ENCODE measurements at regions of chr5 and their contacts with region 1.

Region 1: DNA sequence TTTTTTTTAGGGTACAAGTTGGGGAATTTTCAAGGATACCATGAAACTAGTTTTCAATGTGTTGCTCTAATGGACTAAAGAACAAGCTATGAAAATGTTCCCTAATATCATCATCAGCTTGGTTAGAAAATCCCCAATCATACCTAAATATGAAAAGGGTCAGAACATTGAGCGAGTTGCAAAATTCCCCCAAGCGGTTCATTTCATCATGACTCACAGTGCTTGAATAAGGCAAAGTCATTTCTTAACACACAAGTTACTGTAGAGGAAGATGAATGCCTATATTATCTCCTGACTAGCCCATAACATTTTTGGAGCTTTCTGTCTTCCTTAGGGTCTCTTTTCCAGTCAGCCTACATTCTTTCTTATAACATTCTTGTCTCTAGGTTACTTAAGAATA is 62.7 kb downstream of the ST8SIA4 start:
- DNase-seq: peak; percentile 47
- H3K4me3 ChIP-seq: no peak overlapping the region
- H3K27ac ChIP-seq: peak overlapping the region; percentile 89
- H3K4me1 ChIP-seq: peaks cover 47% of the 10 kb centered on the region
- H3K27me3 ChIP-seq: no peaks in the 10 kb centered on the region
- CTCF ChIP-seq: no peak
- POLR2A ChIP-seq: no peak

Region 2: DNA sequence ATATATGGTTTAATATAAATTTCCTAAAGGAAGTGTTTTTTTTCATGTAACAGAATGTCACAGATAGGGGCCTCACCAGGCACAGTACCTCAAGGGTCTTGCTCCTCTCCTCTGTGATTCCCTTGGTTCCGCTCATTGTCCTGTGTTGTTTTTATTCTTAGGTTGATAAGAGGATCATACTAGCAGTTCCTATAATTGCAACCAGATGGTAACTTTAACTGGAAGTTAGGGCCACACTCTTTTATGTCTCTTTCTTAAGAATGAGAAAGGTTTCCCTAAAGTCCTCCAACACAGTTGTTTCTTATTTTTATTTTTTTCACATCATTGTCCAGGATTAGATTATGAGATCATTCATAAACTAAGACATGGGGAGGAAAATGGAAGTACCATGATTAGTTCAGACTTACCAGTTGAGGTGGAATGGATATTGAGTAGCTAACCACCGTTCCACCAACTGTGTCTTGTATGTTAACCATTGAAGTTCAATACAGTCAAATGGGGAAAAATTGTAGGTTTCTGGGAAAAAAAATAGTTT is 264.1 kb before region 1 on chr5:
- CTCF ChIA-PET with region 1: no interaction called
- POLR2A ChIA-PET with region 1: no interaction called
- dilution Hi-C with region 1: no loop called
- intact Hi-C with region 1: loop called (anchors 2 kb)
- DNase-seq: peak; percentile 83
- H3K4me3 ChIP-seq: peak overlapping the region in 1 of 3 experiments; percentile 32
- H3K27ac ChIP-seq: peak overlapping the region; percentile 92
- H3K4me1 ChIP-seq: peaks cover 24% of the 10 kb centered on the region
- H3K27me3 ChIP-seq: no peaks in the 10 kb centered on the region
- CTCF ChIP-seq: no peak
- POLR2A ChIP-seq: no peak

Region 3: DNA sequence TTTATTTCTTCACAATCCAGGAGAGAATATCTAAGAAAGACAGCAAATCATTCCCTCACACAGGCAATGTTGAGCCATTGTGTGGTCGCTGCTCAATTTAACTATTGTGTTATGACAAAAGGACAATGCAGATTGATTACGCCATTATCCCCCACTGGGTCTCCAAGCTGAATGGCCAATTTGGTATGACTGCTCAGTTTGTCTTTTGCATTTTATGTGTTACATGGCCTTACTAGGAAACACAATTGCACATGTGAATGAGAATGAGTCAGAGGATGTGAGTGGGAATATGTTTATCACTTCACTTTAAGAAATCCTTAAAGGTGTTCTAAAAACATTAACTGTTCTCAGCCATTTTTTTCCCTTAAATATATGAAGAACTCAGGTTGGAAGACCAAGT is 196.9 kb before region 1 on chr5:
- CTCF ChIA-PET with region 1: no interaction called
- POLR2A ChIA-PET with region 1: no interaction called
- dilution Hi-C with region 1: no loop called
- intact Hi-C with region 1: loop called (anchors 5 kb)
- DNase-seq: peak; percentile 79
- H3K4me3 ChIP-seq: no peak overlapping the region
- H3K27ac ChIP-seq: peak overlapping the region; percentile 10
- H3K4me1 ChIP-seq: peaks cover 12% of the 10 kb centered on the region
- H3K27me3 ChIP-seq: no peaks in the 10 kb centered on the region
- CTCF ChIP-seq: no peak
- POLR2A ChIP-seq: no peak

Region 4: DNA sequence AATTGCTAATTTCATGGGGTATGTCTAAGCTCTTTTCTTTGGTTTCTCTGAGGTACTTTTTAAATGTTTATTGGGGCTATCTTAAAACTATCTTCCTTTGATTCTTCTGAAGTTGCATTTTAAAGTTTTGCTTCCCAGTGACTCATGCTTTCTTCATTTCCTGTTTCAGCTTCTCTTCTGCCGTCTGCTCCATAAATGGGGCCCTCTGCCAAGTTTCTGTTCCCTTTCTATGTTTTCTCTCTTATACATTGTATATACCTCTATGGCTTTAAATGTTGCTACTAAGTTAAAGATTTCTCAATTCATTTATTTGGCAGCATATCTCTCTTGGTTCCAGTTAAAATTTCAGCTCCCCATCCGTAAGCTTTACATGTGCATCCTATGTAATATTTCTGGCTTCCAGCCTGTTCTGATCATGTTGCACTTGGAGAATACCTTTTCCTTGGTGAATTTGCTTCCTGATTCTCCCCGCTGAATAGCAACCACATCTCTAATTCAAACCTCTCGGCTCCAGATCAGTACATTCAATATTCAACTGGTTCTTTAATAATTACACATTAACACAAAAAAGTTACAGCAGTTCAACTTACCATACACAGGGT is 62.6 kb before region 1 on chr5:
- CTCF ChIA-PET with region 1: interaction called, 3 read pairs
- POLR2A ChIA-PET with region 1: no interaction called
- dilution Hi-C with region 1: no loop called
- intact Hi-C with region 1: loop called (anchors 2 kb)
- DNase-seq: peak; percentile 91
- H3K4me3 ChIP-seq: peak overlapping the region in 1 of 3 experiments; percentile 21
- H3K27ac ChIP-seq: peak overlapping the region; percentile 73
- H3K4me1 ChIP-seq: peaks cover 22% of the 10 kb centered on the region
- H3K27me3 ChIP-seq: no peaks in the 10 kb centered on the region
- CTCF ChIP-seq: no peak
- POLR2A ChIP-seq: no peak

Region 5: GRCh38 chr5:100854591-100854990 is 14.2 kb after region 1 on chr5:
- CTCF ChIA-PET with region 1: interaction called, 14 read pairs
- POLR2A ChIA-PET with region 1: no interaction called
- dilution Hi-C with region 1: no loop called
- intact Hi-C with region 1: no loop called
- DNase-seq: peak; percentile 84
- H3K4me3 ChIP-seq: no peak overlapping the region
- H3K27ac ChIP-seq: peak overlapping the region; percentile 28
- H3K4me1 ChIP-seq: peaks cover 13% of the 10 kb centered on the region
- H3K27me3 ChIP-seq: no peaks in the 10 kb centered on the region
- CTCF ChIP-seq: no peak
- POLR2A ChIP-seq: no peak

Region 6: DNA sequence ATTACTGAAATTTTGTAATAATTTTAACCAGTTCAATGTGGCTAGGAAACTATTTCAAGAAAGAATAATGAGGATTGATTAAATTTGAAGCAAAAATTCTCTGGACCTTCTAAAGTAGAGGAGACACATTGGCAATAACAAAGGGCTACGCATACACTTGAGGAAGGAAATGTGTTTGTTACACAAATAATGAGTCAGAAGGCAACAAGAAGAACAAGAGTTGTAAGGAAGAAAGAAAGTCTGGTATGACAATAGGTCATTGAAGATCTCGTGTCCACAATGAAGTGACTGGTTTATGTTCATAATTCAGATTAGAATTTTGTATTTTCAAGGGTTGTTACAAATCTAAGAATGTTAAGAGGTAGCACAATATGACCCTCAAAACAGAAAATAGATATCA is 36.9 kb after region 1 on chr5:
- CTCF ChIA-PET with region 1: interaction called, 3 read pairs
- POLR2A ChIA-PET with region 1: no interaction called
- dilution Hi-C with region 1: no loop called
- intact Hi-C with region 1: loop called (anchors 1 kb)
- DNase-seq: peak; percentile 87
- H3K4me3 ChIP-seq: no peak overlapping the region
- H3K27ac ChIP-seq: peak overlapping the region; percentile 84
- H3K4me1 ChIP-seq: peaks cover 16% of the 10 kb centered on the region
- H3K27me3 ChIP-seq: no peaks in the 10 kb centered on the region
- CTCF ChIP-seq: no peak
- POLR2A ChIP-seq: no peak

Measured in endothelial cell of umbilical vein (primary cell).